ENCODE measurements at regions of chr11 and their contacts with region 1.

Region 1: DNA sequence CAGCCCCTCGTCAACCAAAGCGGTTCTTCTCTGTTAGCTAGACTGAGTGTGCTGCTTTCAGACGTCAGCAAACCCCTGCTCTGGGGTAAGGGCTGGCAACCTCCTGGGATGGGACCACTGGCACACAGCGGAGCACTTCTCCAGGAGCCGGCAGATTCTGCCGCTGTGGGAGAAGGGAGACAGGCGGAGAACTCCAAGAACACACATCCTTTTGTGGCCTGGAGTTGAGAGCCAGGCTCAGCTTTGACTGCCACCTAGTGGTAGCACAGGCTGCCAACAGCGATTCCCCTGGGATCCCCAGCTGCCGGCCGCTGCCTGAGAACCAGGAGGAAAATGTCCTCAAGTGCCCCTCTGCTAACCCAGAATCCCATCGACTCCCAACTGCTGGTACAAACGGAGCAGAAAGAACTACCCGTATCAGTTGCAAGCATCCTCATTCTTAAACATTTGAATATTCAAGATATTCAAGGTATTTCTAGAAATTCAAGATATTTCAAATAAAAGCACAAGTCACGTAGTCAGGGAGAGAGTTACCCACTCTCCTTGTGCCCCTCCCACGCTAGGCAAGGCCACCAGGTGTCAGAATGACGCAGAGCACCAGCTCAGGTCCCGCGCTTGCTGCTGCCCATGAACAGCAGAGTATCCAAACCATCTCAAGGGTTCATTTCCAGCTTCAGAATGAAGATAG is 4.9 kb downstream of the LTO1 start:
- DNase-seq: peak; percentile 77
- ATAC-seq: peak; percentile 38
- H3K4me3 Mint-ChIP-seq: no peak overlapping the region
- H3K27ac Mint-ChIP-seq: no peak overlapping the region
- H3K4me1 Mint-ChIP-seq: peaks cover 26% of the 10 kb centered on the region
- H3K27me3 Mint-ChIP-seq: no peaks in the 10 kb centered on the region

Region 2: DNA sequence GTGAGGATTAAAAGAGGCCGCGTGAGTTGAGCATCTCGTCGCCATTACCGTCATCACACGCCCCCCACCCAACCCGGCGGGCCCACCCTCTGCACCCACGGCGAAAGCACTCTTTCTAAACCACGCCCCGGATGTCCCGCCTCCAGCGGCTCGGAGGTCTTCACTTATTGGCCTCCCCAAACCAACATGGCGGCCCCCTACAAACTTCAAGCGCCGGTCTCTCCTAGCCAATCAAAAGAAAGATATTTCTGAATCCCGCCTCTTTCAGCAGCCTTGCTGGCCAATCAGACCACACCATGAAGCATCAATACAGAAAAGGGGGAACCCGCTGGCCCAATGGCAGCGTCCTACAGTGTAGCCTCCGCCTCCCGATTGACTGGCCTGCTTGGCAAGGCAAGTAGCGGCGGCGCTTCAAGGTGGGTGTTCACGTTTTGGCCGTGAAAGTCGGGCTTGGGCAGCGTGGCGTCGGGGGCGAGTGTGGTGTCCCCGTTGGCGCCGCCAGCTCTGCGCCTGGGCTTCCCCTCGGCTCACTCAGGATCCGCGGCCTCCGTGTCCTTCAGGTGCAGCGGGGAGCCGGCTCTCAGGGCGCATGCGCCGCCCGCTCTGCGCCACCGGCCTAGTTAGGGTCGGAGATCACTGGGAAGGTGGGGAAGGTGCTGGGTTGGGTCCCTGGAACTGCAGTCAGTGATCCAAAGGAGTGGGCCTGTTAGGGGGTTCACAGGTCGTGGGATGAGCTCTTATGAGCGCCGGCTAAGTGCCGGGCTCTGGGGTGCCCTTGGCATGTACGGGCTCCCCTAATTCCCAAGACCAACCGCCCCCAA is 1639.8 kb before region 1 on chr11 and contains the start of gene NDUFS8:
- CTCF ChIA-PET with region 1: no interaction called
- POLR2A ChIA-PET with region 1: no interaction called
- intact Hi-C with region 1: loop called in 1 of 2 experiments (anchors 10 kb)
- DNase-seq: peak; percentile 97
- ATAC-seq: peak; percentile 99
- H3K4me3 Mint-ChIP-seq: peak within 1 kb of the TSS; percentile 96
- H3K27ac Mint-ChIP-seq: peak within 1 kb of the TSS; percentile 95
- H3K4me1 Mint-ChIP-seq: peaks cover 26% of the 10 kb centered on the region
- H3K27me3 Mint-ChIP-seq: no peaks in the 10 kb centered on the region
- total RNA-seq, gene NDUFS8: 108 to 113 TPM

Region 3: GRCh38 chr11:68903288-68904247 is 766.7 kb before region 1 on chr11 and contains the starts of genes IGHMBP2 and MRPL21:
- CTCF ChIA-PET with region 1: no interaction called
- POLR2A ChIA-PET with region 1: no interaction called
- intact Hi-C with region 1: loop called in 1 of 2 experiments (anchors 10 kb)
- DNase-seq: peak; percentile 93
- ATAC-seq: peak; percentile 94
- H3K4me3 Mint-ChIP-seq: peak within 1 kb of the TSS; percentile 93
- H3K27ac Mint-ChIP-seq: peak within 1 kb of the TSS; percentile 91
- H3K4me1 Mint-ChIP-seq: peaks cover 29% of the 10 kb centered on the region
- H3K27me3 Mint-ChIP-seq: no peaks in the 10 kb centered on the region
- total RNA-seq, gene IGHMBP2: 20.9 to 25.4 TPM
- total RNA-seq, gene MRPL21: 100 to 102 TPM

Region 4: GRCh38 chr11:69101115-69101791 is 569.0 kb before region 1 on chr11:
- CTCF ChIA-PET with region 1: interaction called, 7 read pairs
- POLR2A ChIA-PET with region 1: no interaction called
- intact Hi-C with region 1: loop called in 1 of 2 experiments (anchors 1 kb)
- DNase-seq: peak; percentile 85
- ATAC-seq: peak; percentile 93
- H3K4me3 Mint-ChIP-seq: no peak overlapping the region
- H3K27ac Mint-ChIP-seq: no peak overlapping the region
- H3K4me1 Mint-ChIP-seq: peaks cover 2% of the 10 kb centered on the region
- H3K27me3 Mint-ChIP-seq: no peaks in the 10 kb centered on the region

Region 5: GRCh38 chr11:69657911-69658625 is 12.2 kb before region 1 on chr11:
- CTCF ChIA-PET with region 1: interaction called, 13 read pairs
- POLR2A ChIA-PET with region 1: no interaction called
- intact Hi-C with region 1: no loop called
- DNase-seq: no peak
- ATAC-seq: no peak
- H3K4me3 Mint-ChIP-seq: no peak overlapping the region
- H3K27ac Mint-ChIP-seq: no peak overlapping the region
- H3K4me1 Mint-ChIP-seq: no peaks in the 10 kb centered on the region
- H3K27me3 Mint-ChIP-seq: no peaks in the 10 kb centered on the region

Region 6: GRCh38 chr11:69962152-69962551 is 291.9 kb after region 1 on chr11:
- CTCF ChIA-PET with region 1: no interaction called
- POLR2A ChIA-PET with region 1: no interaction called
- intact Hi-C with region 1: no loop called
- DNase-seq: no peak
- ATAC-seq: no peak
- H3K4me3 Mint-ChIP-seq: no peak overlapping the region
- H3K27ac Mint-ChIP-seq: no peak overlapping the region
- H3K4me1 Mint-ChIP-seq: no peaks in the 10 kb centered on the region
- H3K27me3 Mint-ChIP-seq: peaks cover 7% of the 10 kb centered on the region